Left ventricle myocardium superior (tissue), 1 donor: ENCODE measurements at regions of chr7 and their contacts with region 1.

Region 1: DNA sequence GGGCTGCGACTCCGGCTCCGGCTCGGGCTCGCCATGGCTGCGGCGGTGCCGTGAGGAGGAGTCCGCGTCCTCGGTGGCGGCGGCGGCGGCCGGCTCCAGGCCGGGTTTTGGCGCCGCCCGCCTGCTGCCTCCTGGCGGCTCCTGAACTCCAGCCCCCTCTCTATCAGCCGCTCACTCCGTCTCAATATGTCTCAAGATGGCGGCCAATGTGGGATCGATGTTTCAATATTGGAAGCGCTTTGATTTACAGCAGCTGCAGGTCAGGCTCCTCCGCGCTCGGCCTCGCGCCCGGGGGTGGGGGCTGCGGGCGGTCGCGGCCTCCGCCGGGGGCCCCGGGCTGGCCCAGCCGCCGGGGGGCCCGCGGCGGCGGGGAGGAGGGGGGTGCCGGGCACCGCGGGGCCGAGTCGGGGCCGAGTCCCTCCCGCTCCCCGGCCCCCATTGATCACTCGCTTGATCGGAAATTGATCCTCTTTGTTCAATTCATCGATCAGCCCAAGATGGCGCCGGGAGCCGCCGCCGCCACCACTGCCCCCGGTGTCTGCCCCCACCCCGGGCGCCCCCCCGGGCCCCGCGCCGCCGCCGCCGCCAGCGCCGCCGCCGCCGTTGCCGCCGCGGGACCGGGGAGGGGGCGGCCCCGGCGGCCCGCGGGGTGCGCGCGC is 1.5 kb upstream of the CUX1 start:
- DNase-seq: peak; percentile 89
- ATAC-seq: peak; percentile 77

Region 2: DNA sequence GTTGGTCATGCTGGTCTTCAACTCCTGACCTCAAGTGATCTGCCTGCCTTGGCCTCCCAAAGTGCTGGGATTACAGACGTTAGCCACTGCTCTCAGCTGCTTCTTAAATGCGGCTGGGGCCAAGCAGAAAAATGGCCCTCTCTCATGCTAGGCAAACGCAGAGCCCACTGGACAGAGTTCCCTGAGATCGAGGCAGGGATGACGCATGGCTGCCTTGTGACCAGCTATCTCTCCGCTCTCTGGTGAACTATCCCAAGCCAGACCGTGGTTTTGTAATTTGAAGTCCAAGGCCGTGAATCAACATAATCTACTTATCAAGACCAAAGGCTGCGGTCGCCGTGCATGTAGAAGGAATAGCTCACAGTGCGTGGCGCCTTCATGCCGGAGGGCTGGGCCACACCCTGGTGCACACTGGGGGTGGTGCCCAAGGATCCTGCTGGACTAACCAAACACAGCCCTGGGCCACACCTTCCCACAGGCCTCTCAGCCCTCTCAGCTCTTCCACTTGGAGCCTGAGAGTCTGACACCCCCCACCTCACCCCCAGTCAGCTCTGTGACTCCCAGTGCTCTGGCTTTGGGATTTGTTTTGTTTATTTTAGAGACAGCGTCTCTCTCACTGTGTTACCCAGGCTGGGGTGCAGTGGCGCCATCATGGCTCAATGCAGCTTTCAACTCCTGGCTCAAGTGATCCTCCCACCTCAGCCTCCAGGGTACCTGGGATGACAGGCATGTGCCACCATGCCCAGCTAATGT is 86.5 kb before region 1 on chr7:
- intact Hi-C with region 1: no loop called
- DNase-seq: no peak
- ATAC-seq: no peak

Region 3: GRCh38 chr7:101743241-101743994 is 72.5 kb before region 1 on chr7:
- intact Hi-C with region 1: loop called (anchors 10 kb)
- DNase-seq: peak; percentile 66
- ATAC-seq: peak; percentile 74

Region 4: DNA sequence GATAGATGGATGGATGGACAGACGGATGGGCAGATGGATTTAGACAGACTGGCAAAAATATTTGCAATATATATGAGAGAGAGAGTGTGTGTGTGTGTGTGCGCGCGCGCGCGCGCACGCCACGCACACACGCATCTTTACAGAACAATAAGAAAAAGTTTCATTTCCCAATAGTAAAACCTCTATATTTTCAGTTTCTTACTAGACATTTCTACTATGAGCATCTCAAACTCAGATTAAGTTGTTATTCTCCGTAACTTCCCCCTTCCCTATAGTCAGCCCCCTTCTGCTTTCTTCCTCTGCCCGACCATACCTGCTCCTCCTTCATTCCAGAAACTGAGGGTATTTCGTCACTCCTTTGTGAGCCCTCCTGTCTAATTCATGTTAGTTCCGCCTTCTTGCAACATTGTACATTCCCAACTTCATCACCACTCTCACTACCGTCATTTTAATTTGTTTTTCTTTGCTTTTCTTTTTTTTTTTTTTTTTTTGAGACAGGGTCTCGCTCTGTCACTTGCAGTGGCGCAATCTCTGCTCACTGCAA is 316.3 kb after region 1 on chr7:
- intact Hi-C with region 1: no loop called
- DNase-seq: no peak
- ATAC-seq: no peak